WTC11 (cell line): ENCODE measurements at regions of chr2 and their contacts with region 1.

Region 1: GRCh38 chr2:137888845-137889244 is 75.4 kb upstream of the HNMT start:
- DNase-seq: peak; percentile 71
- ATAC-seq: peak; percentile 65
- H3K4me3 Mint-ChIP-seq: no peak overlapping the region
- H3K27ac Mint-ChIP-seq: peak overlapping the region; percentile 35; the same call in 1 of the 2 replicates
- H3K4me1 Mint-ChIP-seq: peaks cover 21% of the 10 kb centered on the region
- H3K27me3 Mint-ChIP-seq: no peaks in the 10 kb centered on the region
- CTCF ChIP-seq: peak; percentile 24; the same call in 1 of the 2 replicates

Region 2: GRCh38 chr2:137865954-137866540 is 22.8 kb before region 1 on chr2:
- CTCF ChIA-PET with region 1: interaction called, 27 read pairs
- POLR2A ChIA-PET with region 1: no interaction called
- DNase-seq: peak; percentile 73
- ATAC-seq: peak; percentile 91
- H3K4me3 Mint-ChIP-seq: no peak overlapping the region
- H3K27ac Mint-ChIP-seq: no peak overlapping the region
- H3K4me1 Mint-ChIP-seq: peaks cover 20% of the 10 kb centered on the region
- H3K27me3 Mint-ChIP-seq: no peaks in the 10 kb centered on the region
- CTCF ChIP-seq: peak; percentile 49

Region 3: DNA sequence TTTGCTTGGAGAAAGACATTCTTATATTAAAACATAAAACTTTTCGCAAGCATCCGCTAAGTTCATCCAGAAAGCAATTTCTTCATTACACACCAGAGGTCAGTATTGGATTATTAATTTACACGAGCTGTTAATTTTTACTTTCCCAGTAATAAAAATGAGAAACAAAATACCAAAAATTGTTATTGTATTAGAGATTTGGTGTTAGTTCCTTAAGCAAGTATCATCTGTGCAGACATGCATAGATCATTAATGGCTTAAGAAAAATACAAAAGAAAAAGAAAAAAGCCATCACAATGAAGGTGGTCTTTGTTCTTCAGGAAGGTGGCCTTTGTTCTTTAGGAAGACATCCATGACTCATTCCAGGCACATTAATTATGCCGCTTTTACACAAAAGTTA is 21.8 kb after region 1 on chr2:
- CTCF ChIA-PET with region 1: interaction called, 10 read pairs
- POLR2A ChIA-PET with region 1: no interaction called
- DNase-seq: no peak
- ATAC-seq: no peak
- H3K4me3 Mint-ChIP-seq: no peak overlapping the region
- H3K27ac Mint-ChIP-seq: no peak overlapping the region
- H3K4me1 Mint-ChIP-seq: 0 out of 2 replicates have a peak, but pooled peaks cover 5% of the 10 kb centered on the region
- H3K27me3 Mint-ChIP-seq: no peaks in the 10 kb centered on the region
- CTCF ChIP-seq: 0 out of 2 replicates have a peak, but pooled peaks have one; percentile 17

Region 4: DNA sequence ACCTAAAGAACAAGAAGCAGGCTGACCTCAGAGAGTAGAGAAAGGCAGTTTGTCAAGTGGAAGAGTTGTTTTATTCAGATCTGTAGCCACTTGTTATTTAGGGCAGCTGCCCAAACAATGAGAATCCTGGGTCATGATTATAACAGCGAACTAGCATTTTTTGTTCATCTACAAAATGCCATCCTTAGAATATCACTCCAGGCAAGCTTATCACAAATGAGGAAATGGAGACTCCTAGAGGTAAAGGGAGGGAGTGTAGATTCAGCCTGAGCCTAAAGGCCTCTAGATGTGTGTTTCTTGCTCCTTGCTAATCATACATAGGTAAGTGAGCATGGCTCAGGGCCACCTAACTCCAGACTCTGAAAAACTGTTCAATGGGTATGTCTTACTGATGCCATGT is 201.5 kb after region 1 on chr2:
- CTCF ChIA-PET with region 1: interaction called, 10 read pairs
- POLR2A ChIA-PET with region 1: no interaction called
- DNase-seq: no peak
- ATAC-seq: peak; percentile 75; the same call in 1 of the 2 replicates
- H3K4me3 Mint-ChIP-seq: no peak overlapping the region
- H3K27ac Mint-ChIP-seq: no peak overlapping the region
- H3K4me1 Mint-ChIP-seq: peaks cover 3% of the 10 kb centered on the region
- H3K27me3 Mint-ChIP-seq: peaks cover 2% of the 10 kb centered on the region; the same call in 1 of the 2 replicates
- CTCF ChIP-seq: peak; percentile 15; the same call in 1 of the 2 replicates

Region 5: GRCh38 chr2:138827426-138828054 is 938.7 kb after region 1 on chr2:
- CTCF ChIA-PET with region 1: interaction called, 23 read pairs
- POLR2A ChIA-PET with region 1: no interaction called
- DNase-seq: no peak
- ATAC-seq: peak; percentile 55
- H3K4me3 Mint-ChIP-seq: no peak overlapping the region
- H3K27ac Mint-ChIP-seq: no peak overlapping the region
- H3K4me1 Mint-ChIP-seq: peaks cover 11% of the 10 kb centered on the region; the same call in 1 of the 2 replicates
- H3K27me3 Mint-ChIP-seq: no peaks in the 10 kb centered on the region
- CTCF ChIP-seq: peak; percentile 65